ENCODE measurements at regions of chr11 and their contacts with region 1.

Region 1: GRCh38 chr11:9302448-9302847 is 11.9 kb downstream of the TMEM41B start:
- DNase-seq: no peak
- H3K4me3 ChIP-seq: no peak overlapping the region
- H3K27ac ChIP-seq: no peak overlapping the region
- H3K4me1 ChIP-seq: no peaks in the 10 kb centered on the region
- CTCF ChIP-seq: no peak

Region 2: GRCh38 chr11:9280655-9281301 is 21.7 kb before region 1 on chr11:
- CTCF ChIA-PET with region 1: no interaction called
- POLR2A ChIA-PET with region 1: interaction called, 4 read pairs
- intact Hi-C with region 1: loop called (anchors 2 kb)
- DNase-seq: peak; percentile 43
- H3K4me3 ChIP-seq: no peak overlapping the region
- H3K27ac ChIP-seq: no peak overlapping the region
- H3K4me1 ChIP-seq: peaks cover 4% of the 10 kb centered on the region
- CTCF ChIP-seq: no peak